ENCODE measurements at regions of chr17 and their contacts with region 1.

Region 1: DNA sequence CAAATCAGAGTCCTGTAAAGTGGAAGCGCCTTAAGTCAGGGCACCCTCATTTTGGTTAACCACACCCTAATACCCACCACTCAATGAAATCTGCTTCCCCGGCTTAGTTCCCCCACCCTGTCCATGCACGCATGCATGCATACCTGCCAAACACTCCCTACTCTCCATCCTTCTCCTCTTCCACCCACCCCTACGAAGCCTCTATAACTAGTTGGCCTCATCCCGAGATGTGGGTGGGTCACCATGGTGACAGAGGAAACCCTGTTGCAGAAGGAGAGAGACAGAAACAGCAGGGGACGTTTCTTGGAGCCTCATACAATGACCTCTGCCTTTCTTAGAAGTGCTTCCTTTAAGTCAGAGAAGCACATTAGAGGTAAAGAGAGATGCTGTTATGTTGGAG is 46.8 kb upstream of the DNAH9 start:
- DNase-seq: no peak
- ATAC-seq: no peak
- H3K4me3 ChIP-seq: no peak overlapping the region
- H3K27ac ChIP-seq: no peak overlapping the region
- H3K4me1 ChIP-seq: no peaks in the 10 kb centered on the region
- H3K27me3 ChIP-seq: peaks cover 0 to 6% (median 0%) of the 10 kb centered on the region in 7 donors
- CTCF ChIP-seq: no peak

Region 2: GRCh38 chr17:10939366-10939765 is 612.1 kb before region 1 on chr17:
- intact Hi-C with region 1: no loop called
- DNase-seq: no peak
- ATAC-seq: no peak
- H3K4me3 ChIP-seq: no peak overlapping the region
- H3K27ac ChIP-seq: no peak overlapping the region
- H3K4me1 ChIP-seq: no peaks in the 10 kb centered on the region
- H3K27me3 ChIP-seq: peaks cover 0 to 8% (median 0%) of the 10 kb centered on the region in 7 donors
- CTCF ChIP-seq: no peak

Region 3: GRCh38 chr17:11601661-11602060 is 50.2 kb after region 1 on chr17:
- intact Hi-C with region 1: loop called in 1 of 10 experiments (anchors 5 kb)
- DNase-seq: no peak
- ATAC-seq: no peak
- H3K4me3 ChIP-seq: no peak overlapping the region
- H3K27ac ChIP-seq: no peak overlapping the region
- H3K4me1 ChIP-seq: peaks cover 0 to 16% (median 0%) of the 10 kb centered on the region in 9 donors
- H3K27me3 ChIP-seq: peaks cover 0 to 20% (median 6%) of the 10 kb centered on the region in 7 donors
- CTCF ChIP-seq: no peak

Region 4: DNA sequence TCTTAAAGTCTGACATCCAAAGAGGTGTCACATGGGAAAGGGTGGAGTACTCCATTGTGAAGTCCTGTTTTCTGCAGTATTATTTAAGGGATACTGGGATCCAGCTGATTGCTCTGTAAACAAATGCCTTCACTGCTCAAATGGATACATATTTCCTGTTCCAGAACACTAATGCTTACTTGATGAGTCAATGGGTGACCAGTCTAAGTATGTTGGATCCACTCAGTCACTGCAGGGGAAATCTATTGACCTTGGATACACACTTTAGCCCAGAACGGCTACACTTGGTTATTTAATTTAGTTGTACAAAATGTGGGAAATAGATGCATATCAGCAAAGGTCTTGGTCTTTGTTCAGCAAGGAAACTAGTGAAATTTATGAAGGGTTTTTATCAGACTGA is 730.6 kb after region 1 on chr17:
- intact Hi-C with region 1: no loop called
- DNase-seq: no peak
- ATAC-seq: no peak
- H3K4me3 ChIP-seq: no peak overlapping the region
- H3K27ac ChIP-seq: no peak overlapping the region
- H3K4me1 ChIP-seq: no peaks in the 10 kb centered on the region
- H3K27me3 ChIP-seq: no peaks in the 10 kb centered on the region
- CTCF ChIP-seq: no peak

Measured in heart right ventricle (tissue), 16 donors.